Posterior cingulate gyrus (tissue), 11 donors: ENCODE measurements at regions of chr17 and their contacts with region 1.

Region 1: GRCh38 chr17:33202021-33202420 is 91.1 kb downstream of the ASIC2 start:
- DNase-seq: no peak

Region 2: DNA sequence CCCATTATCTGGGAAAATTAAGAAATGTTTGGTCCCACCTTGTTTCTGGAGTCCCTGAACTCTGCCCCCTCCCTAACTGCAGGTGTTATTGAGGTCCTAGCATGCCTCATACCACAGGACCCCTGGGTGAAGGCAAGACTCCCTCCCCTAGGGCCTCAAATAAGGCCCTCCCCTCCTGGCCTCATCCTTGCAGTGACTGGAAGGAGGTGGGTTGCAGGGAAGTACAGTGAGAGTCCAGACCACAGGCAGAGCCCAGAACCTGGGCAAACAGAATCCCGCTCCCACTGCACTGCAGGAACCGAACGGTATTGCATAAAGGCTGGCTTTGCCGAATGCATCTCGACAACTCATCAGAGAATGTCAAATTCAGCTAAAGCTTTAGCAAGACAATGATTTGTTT is 35.5 kb before region 1 on chr17:
- intact Hi-C with region 1: loop called (anchors 2 kb)
- DNase-seq: no peak

Region 3: GRCh38 chr17:33302394-33302793 is 100.4 kb after region 1 on chr17:
- intact Hi-C with region 1: no loop called
- DNase-seq: no peak